Heart left ventricle (tissue), 16 donors: ENCODE measurements at regions of chr19 and their contacts with region 1.

Region 1: GRCh38 chr19:14472202-14472938 is 2.8 kb downstream of the PTGER1 start:
- DNase-seq: peak; percentile 72 to 89 (median 74)
- ATAC-seq: peak in 3 of 4 donors; percentile 46 to 61 (median 56)
- H3K4me3 ChIP-seq: peak overlapping the region in 8 of 12 donors; percentile 5 to 37 (median 22)
- H3K27ac ChIP-seq: no peak overlapping the region
- H3K4me1 ChIP-seq: peaks cover 4 to 52% (median 22%) of the 10 kb centered on the region in 12 donors
- H3K27me3 ChIP-seq: peaks cover 0 to 39% (median 16%) of the 10 kb centered on the region in 9 donors
- CTCF ChIP-seq: peak; percentile 96 to 99 (median 97)
- POLR2A ChIP-seq: no peak

Region 2: GRCh38 chr19:14354445-14354844 is 117.9 kb before region 1 on chr19:
- intact Hi-C with region 1: loop called in 1 of 10 experiments (anchors 10 kb)
- DNase-seq: no peak
- ATAC-seq: no peak
- H3K4me3 ChIP-seq: no peak overlapping the region
- H3K27ac ChIP-seq: no peak overlapping the region
- H3K4me1 ChIP-seq: peaks cover 0 to 34% (median 0%) of the 10 kb centered on the region in 12 donors
- H3K27me3 ChIP-seq: no peaks in the 10 kb centered on the region
- CTCF ChIP-seq: no peak
- POLR2A ChIP-seq: no peak

Region 3: DNA sequence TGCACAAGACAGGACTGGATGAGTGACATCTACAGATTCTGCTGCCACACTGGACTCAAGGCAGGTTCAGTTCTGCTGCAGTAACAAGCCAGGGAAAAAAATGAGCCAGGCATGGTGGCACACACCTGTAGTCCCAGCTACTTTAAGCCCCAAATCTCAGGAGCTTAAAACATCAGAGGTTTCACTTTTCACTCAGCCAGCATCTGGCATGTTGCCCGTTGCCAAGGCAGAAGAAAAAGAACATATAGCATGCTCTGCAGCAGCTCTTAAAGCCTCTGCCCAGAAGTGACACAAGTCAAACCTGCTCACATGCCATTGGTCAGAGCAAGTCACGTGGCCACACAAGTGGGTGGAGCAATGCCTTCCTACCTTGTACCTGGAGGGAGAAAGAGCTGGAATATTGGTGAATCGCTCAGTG is 105.9 kb before region 1 on chr19:
- intact Hi-C with region 1: loop called in 1 of 10 experiments (anchors 10 kb)
- DNase-seq: peak; percentile 56 to 79 (median 61)
- ATAC-seq: peak in 1 of 4 donors; percentile 36
- H3K4me3 ChIP-seq: peak overlapping the region in 1 of 12 donors; percentile 13
- H3K27ac ChIP-seq: peak overlapping the region in 1 of 12 donors; percentile 93
- H3K4me1 ChIP-seq: peaks cover 4 to 98% (median 27%) of the 10 kb centered on the region in 12 donors
- H3K27me3 ChIP-seq: no peaks in the 10 kb centered on the region
- CTCF ChIP-seq: no peak
- POLR2A ChIP-seq: no peak